Activated CD8-positive, alpha-beta T cell treated with anti-CD3 and anti-CD28 coated beads, Interleukin-2, amount 10 ng/mL, durations not matched to agents 7 days and 5 days (primary cell): ENCODE measurements at regions of chr6 and their contacts with region 1.

Region 1: GRCh38 chr6:117602151-117602898 is at the start of gene GOPC:
- DNase-seq: peak; percentile 96
- ATAC-seq: peak; percentile 98
- H3K4me3 Mint-ChIP-seq: peak within 1 kb of the TSS; percentile 100
- H3K27ac Mint-ChIP-seq: peak within 1 kb of the TSS; percentile 100
- H3K4me1 Mint-ChIP-seq: peaks cover 32% of the 10 kb centered on the region
- H3K27me3 Mint-ChIP-seq: no peaks in the 10 kb centered on the region
- total RNA-seq, gene GOPC: 23.3 to 23.4 TPM

Region 2: GRCh38 chr6:117432273-117432672 is 170.1 kb before region 1 on chr6:
- CTCF ChIA-PET with region 1: no interaction called
- POLR2A ChIA-PET with region 1: no interaction called
- DNase-seq: no peak
- ATAC-seq: no peak
- H3K4me3 Mint-ChIP-seq: no peak overlapping the region
- H3K27ac Mint-ChIP-seq: no peak overlapping the region
- H3K4me1 Mint-ChIP-seq: no peaks in the 10 kb centered on the region
- H3K27me3 Mint-ChIP-seq: peaks cover 15% of the 10 kb centered on the region

Region 3: DNA sequence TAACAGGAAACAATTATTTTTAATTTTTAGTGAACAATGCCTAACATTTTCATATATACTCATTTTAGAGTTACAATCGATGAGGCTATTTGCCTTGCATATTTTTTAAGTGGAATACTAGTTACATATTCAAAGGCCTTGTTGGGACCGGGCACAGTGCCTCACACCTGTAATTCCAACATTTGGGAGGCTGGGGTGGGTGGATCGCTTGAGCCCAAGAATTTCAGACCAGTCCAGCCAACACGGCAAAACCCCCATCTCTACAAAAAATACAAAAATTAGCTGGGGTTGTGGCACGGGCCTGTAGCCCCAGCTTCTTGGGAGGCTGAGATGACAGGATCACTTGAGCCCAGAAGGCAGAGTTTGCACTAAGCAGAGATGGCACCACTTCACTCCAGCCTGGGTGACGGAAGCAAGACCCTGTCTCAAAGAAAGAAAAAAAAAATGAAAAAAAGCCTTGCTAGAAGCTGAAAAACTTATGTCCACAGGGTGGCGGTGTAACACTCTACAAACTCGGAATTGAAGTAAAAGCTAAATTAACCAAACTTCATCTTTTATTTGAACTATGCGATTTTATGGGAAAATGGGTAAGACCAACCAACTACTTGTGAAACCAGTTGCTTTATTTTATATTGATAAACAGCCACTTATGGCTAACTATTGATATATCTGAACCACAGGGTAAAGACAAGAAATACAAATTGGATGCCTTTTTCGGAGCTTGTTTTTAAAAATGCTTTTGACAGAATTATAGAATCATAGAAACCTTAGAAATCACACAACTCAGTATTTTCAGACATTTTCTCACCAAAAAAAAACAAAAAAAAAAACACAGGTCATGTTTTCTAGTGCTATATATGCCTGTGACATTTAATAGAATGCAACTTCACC is 152.5 kb before region 1 on chr6:
- CTCF ChIA-PET with region 1: interaction called, 88 read pairs
- POLR2A ChIA-PET with region 1: interaction called, 8 read pairs
- DNase-seq: peak; percentile 73
- ATAC-seq: no peak
- H3K4me3 Mint-ChIP-seq: no peak overlapping the region
- H3K27ac Mint-ChIP-seq: no peak overlapping the region
- H3K4me1 Mint-ChIP-seq: peaks cover 1% of the 10 kb centered on the region
- H3K27me3 Mint-ChIP-seq: peaks cover 33% of the 10 kb centered on the region

Region 4: DNA sequence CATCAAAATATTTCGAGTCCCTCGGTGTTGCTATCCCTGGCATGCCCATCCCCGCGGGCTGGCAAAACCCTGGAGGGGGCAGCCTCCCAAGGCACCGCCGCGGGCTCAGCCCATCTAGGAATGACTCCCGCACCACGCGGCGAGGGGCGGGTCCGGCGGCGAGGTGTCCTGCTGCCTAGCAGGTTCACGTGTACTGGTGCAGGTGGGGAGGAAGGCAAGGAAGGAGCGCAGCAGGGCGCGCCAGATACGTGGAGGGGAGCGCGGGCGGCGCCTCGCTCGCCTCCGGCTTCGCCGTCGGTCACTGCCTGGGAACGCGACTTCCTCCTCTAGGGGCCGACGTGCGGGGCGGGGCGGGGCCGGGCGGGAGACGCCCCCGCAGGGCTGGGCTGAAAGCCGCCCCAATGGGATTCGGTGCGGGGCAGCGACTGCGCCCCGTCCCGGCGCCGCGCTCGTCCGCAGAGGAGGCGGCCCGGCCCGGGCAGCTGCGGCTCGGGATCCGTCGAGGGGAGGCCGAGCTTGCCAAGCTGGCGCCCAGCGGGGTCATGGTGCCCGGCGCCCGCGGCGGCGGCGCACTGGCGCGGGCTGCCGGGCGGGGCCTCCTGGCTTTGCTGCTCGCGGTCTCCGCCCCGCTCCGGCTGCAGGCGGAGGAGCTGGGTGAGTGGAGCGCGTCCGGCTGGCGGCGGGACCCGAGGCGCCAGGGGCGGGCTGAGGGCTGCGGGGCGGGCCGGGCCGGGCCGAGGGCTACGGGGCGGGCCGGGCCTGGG is 119.9 kb before region 1 on chr6 and contains the start of gene DCBLD1:
- CTCF ChIA-PET with region 1: interaction called, 42 read pairs
- POLR2A ChIA-PET with region 1: interaction called, 7 read pairs
- DNase-seq: peak; percentile 66
- ATAC-seq: peak; percentile 87
- H3K4me3 Mint-ChIP-seq: peak within 1 kb of the TSS; percentile 85
- H3K27ac Mint-ChIP-seq: peak within 1 kb of the TSS; percentile 48
- H3K4me1 Mint-ChIP-seq: peaks cover 18% of the 10 kb centered on the region
- H3K27me3 Mint-ChIP-seq: peaks cover 47% of the 10 kb centered on the region
- total RNA-seq, gene DCBLD1: 2.5 to 4.3 TPM

Region 5: DNA sequence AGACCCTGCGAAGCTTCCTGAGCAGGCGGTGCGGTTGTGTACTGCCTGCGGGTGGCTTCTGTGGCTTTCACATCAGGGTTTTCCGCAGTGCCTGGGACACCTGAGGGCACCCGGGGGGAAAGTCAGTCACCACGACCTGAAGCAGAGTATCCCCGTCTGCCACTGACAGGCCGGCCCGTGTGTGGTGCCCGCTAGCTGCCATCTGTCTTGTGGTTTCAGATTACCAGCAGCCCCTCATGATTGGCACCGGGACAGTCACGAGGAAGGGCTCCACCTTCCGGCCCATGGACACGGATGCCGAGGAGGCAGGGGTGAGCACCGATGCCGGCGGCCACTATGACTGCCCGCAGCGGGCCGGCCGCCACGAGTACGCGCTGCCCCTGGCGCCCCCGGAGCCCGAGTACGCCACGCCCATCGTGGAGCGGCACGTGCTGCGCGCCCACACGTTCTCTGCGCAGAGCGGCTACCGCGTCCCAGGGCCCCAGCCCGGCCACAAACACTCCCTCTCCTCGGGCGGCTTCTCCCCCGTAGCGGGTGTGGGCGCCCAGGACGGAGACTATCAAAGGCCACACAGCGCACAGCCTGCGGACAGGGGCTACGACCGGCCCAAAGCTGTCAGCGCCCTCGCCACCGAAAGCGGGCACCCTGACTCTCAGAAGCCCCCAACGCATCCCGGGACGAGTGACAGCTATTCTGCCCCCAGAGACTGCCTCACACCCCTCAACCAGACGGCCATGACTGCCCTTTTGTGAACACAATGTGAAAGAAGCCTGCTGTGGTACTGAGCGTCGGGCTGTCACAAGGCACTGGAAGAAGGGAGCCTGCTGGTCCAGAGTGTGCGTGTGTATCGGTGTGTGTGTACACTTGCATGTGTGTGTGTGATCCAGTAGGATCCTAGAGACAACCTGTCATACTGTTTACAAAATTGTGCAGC is 54.4 kb before region 1 on chr6:
- CTCF ChIA-PET with region 1: interaction called, 28 read pairs
- POLR2A ChIA-PET with region 1: interaction called, 31 read pairs
- DNase-seq: peak; percentile 62
- ATAC-seq: peak; percentile 56
- H3K4me3 Mint-ChIP-seq: peak overlapping the region; percentile 75
- H3K27ac Mint-ChIP-seq: peak overlapping the region; percentile 89
- H3K4me1 Mint-ChIP-seq: peaks cover 44% of the 10 kb centered on the region
- H3K27me3 Mint-ChIP-seq: peaks cover 16% of the 10 kb centered on the region

Region 6: GRCh38 chr6:117555882-117556498 is 46.3 kb before region 1 on chr6:
- CTCF ChIA-PET with region 1: interaction called, 28 read pairs
- POLR2A ChIA-PET with region 1: interaction called, 31 read pairs
- DNase-seq: peak; percentile 71
- ATAC-seq: peak; percentile 51
- H3K4me3 Mint-ChIP-seq: no peak overlapping the region
- H3K27ac Mint-ChIP-seq: no peak overlapping the region
- H3K4me1 Mint-ChIP-seq: peaks cover 1% of the 10 kb centered on the region
- H3K27me3 Mint-ChIP-seq: peaks cover 5% of the 10 kb centered on the region

Region 7: GRCh38 chr6:117591405-117591804 is 10.9 kb before region 1 on chr6:
- CTCF ChIA-PET with region 1: interaction called, 5 read pairs
- POLR2A ChIA-PET with region 1: interaction called, 12 read pairs
- DNase-seq: no peak
- ATAC-seq: no peak
- H3K4me3 Mint-ChIP-seq: no peak overlapping the region
- H3K27ac Mint-ChIP-seq: no peak overlapping the region
- H3K4me1 Mint-ChIP-seq: no peaks in the 10 kb centered on the region
- H3K27me3 Mint-ChIP-seq: no peaks in the 10 kb centered on the region

Region 8: GRCh38 chr6:117624869-117625481 is 22.6 kb after region 1 on chr6:
- CTCF ChIA-PET with region 1: no interaction called
- POLR2A ChIA-PET with region 1: no interaction called
- DNase-seq: no peak
- ATAC-seq: no peak
- H3K4me3 Mint-ChIP-seq: no peak overlapping the region
- H3K27ac Mint-ChIP-seq: no peak overlapping the region
- H3K4me1 Mint-ChIP-seq: no peaks in the 10 kb centered on the region
- H3K27me3 Mint-ChIP-seq: no peaks in the 10 kb centered on the region